CD8-positive, alpha-beta T cell (primary cell): ENCODE measurements at regions of chr9 and their contacts with region 1.

Region 1: DNA sequence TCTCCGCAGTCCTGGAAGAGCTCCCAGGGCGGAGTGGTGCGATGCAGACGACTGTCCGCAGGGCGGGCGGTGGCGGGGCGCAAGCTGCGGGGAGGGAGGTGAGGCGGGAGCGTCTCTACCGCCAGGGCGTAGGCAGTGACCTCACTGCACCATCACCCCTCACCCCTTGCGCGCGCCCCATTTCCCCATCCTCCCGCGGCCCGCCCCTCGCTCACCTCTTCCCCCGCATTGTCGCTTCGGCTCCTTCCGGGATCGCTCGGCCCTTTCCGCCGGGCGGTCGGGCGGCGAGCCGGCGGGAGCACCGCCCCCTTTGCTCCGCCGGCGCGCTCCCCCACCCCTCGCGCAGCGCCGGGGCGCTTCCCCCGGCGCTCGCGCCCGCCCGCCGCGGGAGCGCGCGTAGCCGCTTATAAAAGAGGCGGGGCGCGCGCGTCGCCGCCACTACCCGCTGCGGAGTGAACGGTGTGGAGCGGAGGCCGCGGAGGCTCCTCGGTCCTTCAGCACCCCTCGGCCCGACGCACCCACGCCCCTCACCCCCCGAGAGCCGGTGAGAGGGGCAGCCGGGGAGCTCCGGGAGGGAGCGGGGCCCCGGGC is at the start of gene SPTAN1:
- DNase-seq: peak; percentile 91 to 97 (median 95)
- ATAC-seq: peak; percentile 85
- H3K4me3 ChIP-seq: peak within 1 kb of the TSS; percentile 85 to 95
- H3K4me3 Mint-ChIP-seq: no peak within 1 kb of the TSS
- H3K27ac ChIP-seq: peak within 1 kb of the TSS; percentile 92 to 93
- H3K27ac Mint-ChIP-seq: peak within 1 kb of the TSS; percentile 96
- H3K4me1 ChIP-seq: peaks cover 54% of the 10 kb centered on the region
- H3K4me1 Mint-ChIP-seq: peaks cover 24% of the 10 kb centered on the region
- H3K27me3 ChIP-seq: no peaks in the 10 kb centered on the region
- H3K27me3 Mint-ChIP-seq: no peaks in the 10 kb centered on the region
- CTCF ChIP-seq: no peak
- total RNA-seq, gene SPTAN1: 299 to 332 TPM

Region 2: GRCh38 chr9:128081056-128081455 is 471.2 kb before region 1 on chr9:
- CTCF ChIA-PET with region 1: no interaction called
- POLR2A ChIA-PET with region 1: no interaction called
- intact Hi-C with region 1: no loop called
- DNase-seq: no peak
- ATAC-seq: no peak
- H3K4me3 ChIP-seq: no peak overlapping the region
- H3K4me3 Mint-ChIP-seq: no peak overlapping the region
- H3K27ac ChIP-seq: peak overlapping the region in 1 of 2 experiments; percentile 19
- H3K27ac Mint-ChIP-seq: peak overlapping the region; percentile 46
- H3K4me1 ChIP-seq: peaks cover 19% of the 10 kb centered on the region
- H3K4me1 Mint-ChIP-seq: peaks cover 49% of the 10 kb centered on the region
- H3K27me3 ChIP-seq: no peaks in the 10 kb centered on the region
- H3K27me3 Mint-ChIP-seq: no peaks in the 10 kb centered on the region
- CTCF ChIP-seq: no peak

Region 3: DNA sequence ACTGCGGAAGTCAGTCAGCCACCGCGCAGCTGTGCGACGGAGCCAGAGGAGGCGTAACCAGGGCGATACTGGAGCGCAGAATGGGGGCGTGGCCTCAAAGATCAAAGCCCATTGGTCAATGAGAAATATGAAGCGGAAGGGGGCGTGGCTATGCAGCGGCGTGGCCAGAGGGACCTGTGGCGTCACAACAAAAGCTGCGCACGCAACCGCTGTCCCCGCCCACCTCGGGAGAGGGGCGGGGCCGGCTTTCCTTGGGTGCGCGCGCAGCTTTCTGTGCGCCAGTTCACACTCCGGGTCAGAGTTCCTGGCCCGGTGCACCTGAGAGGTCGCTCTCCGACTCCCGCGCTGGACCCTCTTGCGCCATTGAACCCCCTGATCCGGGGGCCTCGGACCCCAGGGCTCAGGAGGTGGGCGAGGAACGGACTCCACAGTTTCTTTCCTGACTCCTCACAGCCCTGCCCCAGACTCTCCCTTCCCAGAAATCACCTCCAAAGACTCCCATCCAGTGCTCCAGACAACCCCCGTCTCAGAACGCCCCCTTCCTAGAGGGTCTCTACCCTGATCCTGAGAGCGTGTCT is 276.2 kb before region 1 on chr9 and contains the starts of genes GOLGA2 and SWI5:
- CTCF ChIA-PET with region 1: no interaction called
- POLR2A ChIA-PET with region 1: interaction called, 3 read pairs
- intact Hi-C with region 1: loop called in 1 of 2 experiments (anchors 10 kb)
- DNase-seq: peak; percentile 99 to 100 (median 100)
- ATAC-seq: peak; percentile 93
- H3K4me3 ChIP-seq: peak within 1 kb of the TSS; percentile 75 to 81
- H3K4me3 Mint-ChIP-seq: peak within 1 kb of the TSS; percentile 96
- H3K27ac ChIP-seq: peak within 1 kb of the TSS; percentile 76 to 81
- H3K27ac Mint-ChIP-seq: peak within 1 kb of the TSS; percentile 96
- H3K4me1 ChIP-seq: peaks cover 22% of the 10 kb centered on the region
- H3K4me1 Mint-ChIP-seq: peaks cover 32% of the 10 kb centered on the region
- H3K27me3 ChIP-seq: no peaks in the 10 kb centered on the region
- H3K27me3 Mint-ChIP-seq: no peaks in the 10 kb centered on the region
- CTCF ChIP-seq: no peak
- total RNA-seq, gene GOLGA2: 49.9 to 59.0 TPM
- total RNA-seq, gene SWI5: 3.5 to 4.3 TPM

Region 4: DNA sequence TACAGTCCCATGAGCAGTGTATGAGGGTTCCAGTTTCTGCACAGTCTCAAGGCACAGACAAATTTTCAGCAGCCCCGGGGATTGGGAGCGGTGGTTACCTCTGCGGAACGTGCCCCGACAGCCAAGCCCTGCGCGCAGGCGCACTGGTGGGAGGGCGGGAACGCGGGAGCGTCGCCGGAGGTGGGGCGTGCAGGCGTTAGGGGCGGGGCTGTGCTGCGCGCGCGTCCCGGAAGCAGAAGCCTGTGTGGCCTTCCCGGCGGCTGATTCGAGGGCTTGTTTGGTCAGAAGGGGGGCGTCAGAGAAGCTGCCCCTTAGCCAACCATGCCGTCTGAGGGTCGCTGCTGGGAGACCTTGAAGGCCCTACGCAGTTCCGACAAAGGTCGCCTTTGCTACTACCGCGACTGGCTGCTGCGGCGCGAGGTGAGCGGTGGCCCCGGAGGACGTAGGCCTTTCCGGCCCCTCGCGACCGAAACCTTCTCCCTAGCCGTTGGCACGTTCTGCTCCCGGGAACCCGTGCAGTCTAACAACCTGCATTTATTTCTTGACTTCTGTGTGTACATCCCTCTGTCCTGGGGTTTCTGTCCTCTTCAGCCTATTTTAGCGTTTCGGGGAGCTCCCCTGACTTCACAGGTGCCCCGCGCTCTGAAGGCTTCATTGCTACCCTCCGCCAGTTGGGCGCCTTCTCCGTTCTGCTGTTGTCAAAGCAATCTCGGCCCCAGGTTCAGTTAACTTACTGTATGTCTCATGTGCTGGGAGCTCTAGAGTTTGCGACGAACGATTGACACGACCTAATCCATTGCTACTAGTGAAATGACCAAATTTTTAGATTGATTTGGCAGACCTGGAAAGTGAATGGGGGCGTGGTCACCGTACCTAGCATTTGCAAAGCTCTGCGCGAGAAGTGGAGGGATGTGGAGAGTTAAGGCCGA is 47.5 kb before region 1 on chr9 and contains the start of gene GLE1:
- CTCF ChIA-PET with region 1: no interaction called
- POLR2A ChIA-PET with region 1: interaction called, 18 read pairs
- intact Hi-C with region 1: loop called (anchors 1 kb)
- DNase-seq: peak; percentile 93 to 99 (median 97)
- ATAC-seq: peak; percentile 95
- H3K4me3 ChIP-seq: peak within 1 kb of the TSS; percentile 80 to 96
- H3K4me3 Mint-ChIP-seq: peak within 1 kb of the TSS; percentile 99
- H3K27ac ChIP-seq: peak within 1 kb of the TSS; percentile 84 to 90
- H3K27ac Mint-ChIP-seq: peak within 1 kb of the TSS; percentile 99
- H3K4me1 ChIP-seq: peaks cover 18% of the 10 kb centered on the region
- H3K4me1 Mint-ChIP-seq: peaks cover 38% of the 10 kb centered on the region
- H3K27me3 ChIP-seq: no peaks in the 10 kb centered on the region
- H3K27me3 Mint-ChIP-seq: no peaks in the 10 kb centered on the region
- CTCF ChIP-seq: no peak
- total RNA-seq, gene GLE1: 6.6 to 8.5 TPM

Region 5: DNA sequence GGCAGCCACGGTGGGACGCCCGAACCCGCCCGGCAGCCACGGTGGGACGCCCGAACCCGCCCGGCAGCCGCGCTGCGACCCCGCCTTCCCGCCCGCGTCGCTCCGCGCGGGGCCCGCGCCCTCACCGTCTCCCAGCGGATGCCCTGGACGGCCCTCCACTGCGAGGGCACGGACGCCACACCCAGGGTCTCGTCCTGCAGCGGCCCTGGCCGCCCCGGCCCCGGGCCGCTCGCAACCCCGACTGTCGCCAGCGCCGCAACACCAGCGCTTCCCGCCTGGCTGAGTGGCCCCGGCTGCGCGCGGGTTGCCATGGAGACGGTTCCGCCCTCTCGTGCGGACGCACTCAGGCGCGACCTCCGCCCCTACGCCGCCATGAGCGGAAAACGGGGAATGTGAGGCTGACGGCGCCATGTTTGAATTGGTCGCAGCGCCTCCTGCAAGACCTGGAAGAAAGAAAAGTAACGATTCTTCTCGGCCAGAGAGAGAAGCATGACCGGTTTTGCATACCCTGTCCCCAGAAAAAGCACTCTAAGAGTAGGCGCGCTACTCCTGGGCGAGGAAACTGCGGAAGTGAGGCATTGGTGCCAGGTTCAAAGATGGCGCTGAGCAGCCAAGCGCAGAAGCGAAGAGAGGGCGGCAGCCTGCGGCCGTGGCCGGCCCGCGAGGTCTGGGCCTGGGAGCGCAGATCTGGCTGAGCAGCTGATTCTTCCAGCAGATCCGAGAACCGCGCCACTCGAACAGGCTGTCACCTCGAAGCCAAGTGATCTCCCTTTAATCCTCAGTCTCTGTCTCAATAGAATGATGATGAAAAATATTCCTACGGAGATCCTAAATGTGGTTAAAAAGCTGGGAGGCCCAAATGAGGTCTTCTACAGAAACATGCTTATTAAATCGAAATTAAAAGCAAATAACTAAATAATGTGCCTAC is 104.4 kb after region 1 on chr9 and contains the start of gene DYNC2I2:
- CTCF ChIA-PET with region 1: no interaction called
- POLR2A ChIA-PET with region 1: no interaction called
- intact Hi-C with region 1: loop called in 1 of 2 experiments (anchors 1 kb)
- DNase-seq: peak; percentile 92 to 98 (median 97)
- ATAC-seq: peak; percentile 96
- H3K4me3 ChIP-seq: peak within 1 kb of the TSS; percentile 72 to 76
- H3K4me3 Mint-ChIP-seq: peak within 1 kb of the TSS; percentile 95
- H3K27ac ChIP-seq: peak within 1 kb of the TSS; percentile 88 to 97
- H3K27ac Mint-ChIP-seq: peak within 1 kb of the TSS; percentile 99
- H3K4me1 ChIP-seq: peaks cover 5% of the 10 kb centered on the region
- H3K4me1 Mint-ChIP-seq: peaks cover 7% of the 10 kb centered on the region
- H3K27me3 ChIP-seq: no peaks in the 10 kb centered on the region
- H3K27me3 Mint-ChIP-seq: no peaks in the 10 kb centered on the region
- CTCF ChIP-seq: no peak
- total RNA-seq, gene DYNC2I2: 3.7 to 3.9 TPM

Region 6: DNA sequence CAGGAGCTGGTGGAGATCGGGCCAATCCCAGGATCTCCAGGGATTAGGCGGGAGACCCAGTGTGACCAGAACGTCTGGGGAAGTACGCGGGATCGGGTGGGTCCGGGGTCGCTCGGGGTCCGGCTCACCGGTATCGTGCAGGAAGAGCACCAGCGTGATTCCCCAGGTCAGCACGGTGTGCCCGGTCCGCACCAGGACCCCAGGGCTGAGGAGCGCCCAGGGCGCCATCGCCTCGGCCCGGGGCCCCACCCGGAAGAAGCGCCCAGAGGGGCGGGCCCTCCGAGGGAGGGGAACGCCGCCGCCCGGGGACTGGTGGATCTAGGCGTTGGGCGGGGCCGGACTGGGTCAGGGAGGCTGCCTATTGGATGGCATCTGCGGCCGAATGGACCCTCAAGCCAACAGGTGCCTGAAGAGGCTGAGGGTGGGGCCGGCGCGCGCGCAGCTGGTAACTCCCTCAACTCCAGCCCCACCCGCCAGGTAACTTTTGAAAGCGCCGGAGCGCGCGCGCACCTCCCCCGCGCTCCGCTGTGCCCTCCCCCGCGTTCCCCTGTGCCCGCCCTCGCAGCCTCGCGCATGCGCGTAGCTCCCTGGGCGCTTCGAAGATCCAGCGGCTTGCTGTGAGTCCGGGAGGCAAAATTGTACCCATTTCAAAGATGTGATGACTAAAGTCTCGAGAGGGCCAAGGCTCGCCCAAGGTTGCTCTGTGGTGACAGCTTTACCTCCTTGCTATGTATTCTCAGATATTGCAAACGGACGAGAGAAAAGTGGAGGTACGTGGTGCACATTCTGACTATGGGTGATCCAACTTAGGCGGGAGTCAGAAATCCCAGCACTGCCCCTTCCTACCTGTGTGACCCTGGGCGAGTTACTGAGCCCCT is 171.9 kb after region 1 on chr9 and contains the start of gene ZDHHC12:
- CTCF ChIA-PET with region 1: no interaction called
- POLR2A ChIA-PET with region 1: interaction called, 4 read pairs
- intact Hi-C with region 1: loop called in 1 of 2 experiments (anchors 1 kb)
- DNase-seq: peak; percentile 97 to 100 (median 99)
- ATAC-seq: peak; percentile 97
- H3K4me3 ChIP-seq: peak within 1 kb of the TSS; percentile 74 to 84
- H3K4me3 Mint-ChIP-seq: peak within 1 kb of the TSS; percentile 89
- H3K27ac ChIP-seq: peak within 1 kb of the TSS; percentile 69 to 79
- H3K27ac Mint-ChIP-seq: peak within 1 kb of the TSS; percentile 92
- H3K4me1 ChIP-seq: peaks cover 37% of the 10 kb centered on the region
- H3K4me1 Mint-ChIP-seq: peaks cover 29% of the 10 kb centered on the region
- H3K27me3 ChIP-seq: no peaks in the 10 kb centered on the region
- H3K27me3 Mint-ChIP-seq: no peaks in the 10 kb centered on the region
- CTCF ChIP-seq: no peak
- total RNA-seq, gene ZDHHC12: 25.5 to 29.6 TPM

Region 7: GRCh38 chr9:129237195-129237611 is 685.0 kb after region 1 on chr9:
- CTCF ChIA-PET with region 1: no interaction called
- POLR2A ChIA-PET with region 1: no interaction called
- intact Hi-C with region 1: no loop called
- DNase-seq: peak in 8 of 9 experiments; percentile 36 to 79 (median 66)
- ATAC-seq: peak; percentile 70
- H3K4me3 ChIP-seq: peak overlapping the region; percentile 51 to 66
- H3K4me3 Mint-ChIP-seq: peak overlapping the region; percentile 88
- H3K27ac ChIP-seq: peak overlapping the region; percentile 56 to 62
- H3K27ac Mint-ChIP-seq: peak overlapping the region; percentile 94
- H3K4me1 ChIP-seq: peaks cover 50% of the 10 kb centered on the region
- H3K4me1 Mint-ChIP-seq: peaks cover 70% of the 10 kb centered on the region
- H3K27me3 ChIP-seq: no peaks in the 10 kb centered on the region
- H3K27me3 Mint-ChIP-seq: no peaks in the 10 kb centered on the region
- CTCF ChIP-seq: no peak